Lower leg skin (tissue), 4 donors: ENCODE measurements at regions of chr1 and their contacts with region 1.

Region 1: GRCh38 chr1:1122078-1122811 is 6.4 kb upstream of the C1orf159 start:
- DNase-seq: peak; percentile 68 to 96
- H3K4me3 ChIP-seq: no peak overlapping the region
- CTCF ChIP-seq: peak in 1 of 3 donors; percentile 58
- POLR2A ChIP-seq: no peak

Region 2: GRCh38 chr1:1285611-1286311 is 163.5 kb after region 1 on chr1:
- intact Hi-C with region 1: loop called (anchors 2 kb)
- DNase-seq: no peak
- H3K4me3 ChIP-seq: no peak overlapping the region
- CTCF ChIP-seq: no peak
- POLR2A ChIP-seq: no peak

Region 3: DNA sequence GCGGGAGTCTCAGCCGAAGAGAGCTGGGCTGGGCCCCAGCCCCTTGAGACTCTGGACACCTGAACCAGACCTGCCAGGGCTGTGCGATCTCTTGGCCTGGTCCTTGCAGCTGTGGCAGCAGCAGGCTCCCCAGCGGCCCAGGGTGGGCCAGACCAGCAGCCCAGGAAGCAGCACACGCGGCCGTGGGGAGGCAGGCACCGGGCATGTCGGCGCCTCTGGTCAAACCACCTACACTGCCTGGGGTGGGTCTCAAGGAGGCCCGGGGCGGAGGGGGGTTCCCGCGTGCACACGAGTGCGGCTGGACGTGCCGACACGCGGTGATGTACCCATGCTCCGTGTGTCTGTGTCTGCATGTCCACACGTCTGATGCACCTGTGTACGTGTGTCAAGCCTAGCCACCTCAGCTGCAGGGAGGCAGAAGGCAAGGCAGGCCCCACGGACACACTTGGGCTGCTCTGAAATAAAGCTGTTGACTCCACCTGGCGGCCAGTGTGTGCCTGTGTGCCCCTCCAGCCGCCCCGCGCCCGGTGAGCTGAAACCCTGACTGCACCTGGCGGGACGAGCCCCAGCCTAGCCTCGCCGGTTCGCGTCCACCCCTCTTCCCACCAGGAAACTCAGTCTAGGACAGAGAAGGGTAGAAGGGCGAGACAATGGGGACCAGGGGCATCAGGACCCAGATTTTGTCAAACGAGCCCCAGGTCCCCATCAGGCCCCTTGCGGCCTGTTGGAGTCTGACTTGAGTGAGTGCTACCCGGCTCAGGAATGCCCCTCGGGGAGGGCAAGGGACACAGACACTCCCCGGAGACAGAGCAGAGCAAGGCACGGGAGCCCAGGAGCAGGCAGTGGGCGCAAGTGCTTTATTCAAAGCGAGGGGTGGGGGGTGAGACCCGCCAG is 169.6 kb after region 1 on chr1:
- intact Hi-C with region 1: loop called (anchors 2 kb)
- DNase-seq: peak in 1 of 2 donors; percentile 62
- H3K4me3 ChIP-seq: no peak overlapping the region
- CTCF ChIP-seq: peak in 1 of 3 donors; percentile 11
- POLR2A ChIP-seq: no peak